SK-MEL-5 (cell line): ENCODE measurements at regions of chr3 and their contacts with region 1.

Region 1: GRCh38 chr3:190366145-190366544 is 21.8 kb upstream of the CLDN16 start:
- DNase-seq: no peak

Region 2: GRCh38 chr3:189961525-189962161 is 404.5 kb before region 1 on chr3:
- in situ Hi-C with region 1: loop called (anchors 25 kb)
- DNase-seq: peak; percentile 91

Region 3: DNA sequence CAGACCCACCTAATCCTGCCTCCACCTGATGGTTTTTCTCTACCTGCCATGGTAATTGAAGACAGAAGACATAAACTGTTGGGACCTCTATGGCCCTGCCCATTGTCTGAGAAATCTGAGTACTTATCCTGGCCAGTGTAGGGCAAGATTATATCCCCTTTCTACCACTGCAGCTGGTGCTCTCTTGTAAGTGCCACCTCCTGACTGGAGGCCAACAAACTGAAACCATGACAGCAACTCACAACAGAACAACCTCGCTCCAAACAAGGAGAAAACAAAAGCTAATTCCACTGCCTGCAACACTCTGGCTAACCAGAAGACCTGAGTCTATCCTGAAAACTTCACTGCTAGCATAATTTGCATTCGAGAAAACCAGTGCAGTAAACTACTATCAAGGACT is 126.8 kb before region 1 on chr3:
- in situ Hi-C with region 1: no loop called
- DNase-seq: no peak

Region 4: DNA sequence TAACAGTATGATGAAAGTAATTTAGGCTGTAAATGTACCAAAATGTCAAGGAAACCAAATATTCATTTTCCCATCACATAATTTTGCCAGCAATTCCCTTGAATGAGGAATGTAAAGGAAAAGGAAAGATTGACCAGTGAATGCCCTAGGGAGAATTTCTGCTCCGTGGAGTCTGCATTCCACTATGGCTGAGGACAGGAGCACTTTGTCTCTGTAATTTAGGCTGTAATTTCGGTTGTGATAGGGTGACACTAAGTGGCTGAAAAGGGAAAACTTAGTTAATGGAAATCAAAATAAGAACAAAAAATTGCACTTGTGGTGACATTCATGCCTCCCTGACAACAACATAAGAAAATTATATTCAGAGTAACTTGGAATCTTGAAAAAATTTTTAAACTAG is 91.9 kb after region 1 on chr3:
- in situ Hi-C with region 1: loop called (anchors 25 kb)
- DNase-seq: peak; percentile 88